Activated T-helper 2 cell treated with anti-CD3 and anti-CD28 coated beads, Interferon-gamma antibody, Interleukin-2, Interleukin-4, amounts not matched to agents 10 μg/mL and 5 μg/mL and 100 μg/mL, durations not matched to agents 14 hours and 24 hours and 36 hours (primary cell): ENCODE measurements at regions of chr7 and their contacts with region 1.

Region 1: GRCh38 chr7:44797329-44798251 is 1.1 kb downstream of the PPIA start:
- DNase-seq: peak; percentile 80
- H3K4me3 Mint-ChIP-seq: peak overlapping the region; percentile 98
- H3K27ac Mint-ChIP-seq: peak overlapping the region; percentile 95
- H3K4me1 Mint-ChIP-seq: peaks cover 28% of the 10 kb centered on the region
- H3K27me3 Mint-ChIP-seq: no peaks in the 10 kb centered on the region

Region 2: GRCh38 chr7:44490351-44491200 is 307.0 kb before region 1 on chr7 and contains the start of gene NUDCD3:
- intact Hi-C with region 1: loop called (anchors 2 kb)
- DNase-seq: peak; percentile 77
- H3K4me3 Mint-ChIP-seq: peak within 1 kb of the TSS; percentile 85
- H3K27ac Mint-ChIP-seq: peak within 1 kb of the TSS; percentile 91
- H3K4me1 Mint-ChIP-seq: peaks cover 35% of the 10 kb centered on the region
- H3K27me3 Mint-ChIP-seq: no peaks in the 10 kb centered on the region
- total RNA-seq, gene NUDCD3: 86.8 and 90.2 TPM in 2 replicates

Region 3: DNA sequence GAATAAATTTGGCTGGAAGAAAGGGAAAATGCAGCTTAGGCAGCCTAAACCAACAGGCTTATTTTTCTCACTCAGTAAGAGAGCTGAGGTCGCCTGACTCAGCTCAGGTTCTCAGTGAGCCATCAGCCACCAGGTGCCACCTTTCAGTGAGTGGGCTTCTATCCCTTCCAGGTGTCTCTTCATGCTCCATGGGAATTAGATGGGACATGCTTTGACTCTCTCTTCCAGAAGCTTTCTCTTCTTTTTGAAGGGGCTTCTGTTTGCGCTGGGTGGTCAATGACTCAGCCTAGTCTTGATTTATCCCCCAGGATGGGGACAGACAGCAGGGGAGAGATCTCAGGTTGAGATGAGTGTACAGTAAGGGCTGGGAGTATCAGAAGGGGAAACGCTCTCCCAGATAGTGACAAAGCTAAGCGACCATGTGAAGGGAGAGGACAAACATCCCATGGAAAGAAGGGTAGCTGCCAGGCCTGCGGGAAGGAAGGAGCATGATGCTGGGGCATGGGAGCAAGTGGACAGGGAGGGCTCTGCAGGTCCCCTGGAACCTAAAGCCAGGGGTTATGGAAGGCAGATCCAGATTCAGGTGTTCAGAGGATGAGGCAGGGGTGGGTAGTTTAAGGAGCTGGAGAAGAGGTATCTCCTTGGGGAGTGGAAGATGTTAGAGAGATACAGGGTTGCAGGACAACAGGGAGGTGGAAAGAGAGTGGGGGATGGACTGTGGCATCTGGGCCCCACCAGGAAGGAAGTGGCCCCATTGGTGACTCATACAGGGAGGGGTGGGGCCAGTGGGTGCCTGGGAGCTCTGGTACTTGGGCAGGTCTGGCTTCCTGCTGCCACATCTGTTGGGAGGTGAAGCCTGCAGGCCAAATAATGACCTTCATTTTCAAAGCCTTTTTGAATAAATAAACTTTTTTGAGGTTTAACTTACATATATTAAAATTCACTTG is 158.7 kb before region 1 on chr7:
- intact Hi-C with region 1: loop called (anchors 2 kb)
- DNase-seq: peak; percentile 84
- H3K4me3 Mint-ChIP-seq: peak overlapping the region; percentile 79
- H3K27ac Mint-ChIP-seq: peak overlapping the region; percentile 99
- H3K4me1 Mint-ChIP-seq: peaks cover 70% of the 10 kb centered on the region
- H3K27me3 Mint-ChIP-seq: no peaks in the 10 kb centered on the region

Region 4: DNA sequence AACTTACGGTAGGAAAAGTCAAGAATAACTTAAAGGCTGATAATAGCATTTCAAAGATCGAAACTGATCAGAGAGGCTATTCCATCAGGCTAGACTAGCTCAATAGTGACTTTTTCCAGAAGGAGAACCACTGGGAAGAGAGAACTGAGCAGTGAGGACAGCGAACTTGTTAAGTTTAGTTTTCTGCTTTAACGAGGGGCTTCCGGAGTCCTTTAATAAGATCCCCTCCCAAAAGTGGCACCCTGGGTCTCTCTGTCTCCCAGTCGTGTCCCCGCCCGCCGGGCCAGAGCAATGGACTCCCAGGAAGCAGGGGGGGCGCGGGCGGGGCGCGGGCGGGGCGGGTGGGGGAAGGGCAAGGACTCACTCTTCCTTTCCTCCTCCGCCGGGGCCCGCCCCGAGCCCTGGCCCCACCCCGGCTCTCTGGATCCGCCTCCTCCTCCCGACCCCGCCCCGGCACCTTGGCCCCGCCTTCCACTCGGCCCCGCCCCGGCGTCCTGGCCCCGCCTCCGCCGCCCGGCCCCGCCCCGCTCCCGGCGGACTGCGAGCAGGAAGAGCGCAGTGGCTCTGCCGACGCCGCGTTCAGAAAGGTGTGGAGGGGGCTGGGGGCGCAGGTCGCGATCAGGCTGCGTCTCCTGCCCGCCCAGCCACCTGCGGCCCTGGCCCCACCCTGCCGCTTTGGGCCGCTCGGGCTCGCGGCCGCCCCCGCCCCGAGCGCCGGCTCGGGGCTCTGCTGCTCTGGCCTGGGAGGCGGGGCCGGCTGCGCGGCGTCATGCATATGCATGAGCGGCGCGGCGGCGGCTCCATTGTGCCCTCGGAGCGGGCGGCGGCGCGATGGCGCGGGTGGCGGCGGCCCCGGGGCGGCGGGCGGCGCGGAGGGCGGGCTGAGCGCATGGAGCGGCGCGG is 49.3 kb before region 1 on chr7 and contains the start of gene ZMIZ2:
- intact Hi-C with region 1: loop called (anchors 1 kb)
- DNase-seq: peak; percentile 87
- H3K4me3 Mint-ChIP-seq: peak within 1 kb of the TSS; percentile 85
- H3K27ac Mint-ChIP-seq: peak within 1 kb of the TSS; percentile 94
- H3K4me1 Mint-ChIP-seq: peaks cover 31% of the 10 kb centered on the region
- H3K27me3 Mint-ChIP-seq: no peaks in the 10 kb centered on the region
- total RNA-seq, gene ZMIZ2: 105 TPM in 2 replicates

Region 5: DNA sequence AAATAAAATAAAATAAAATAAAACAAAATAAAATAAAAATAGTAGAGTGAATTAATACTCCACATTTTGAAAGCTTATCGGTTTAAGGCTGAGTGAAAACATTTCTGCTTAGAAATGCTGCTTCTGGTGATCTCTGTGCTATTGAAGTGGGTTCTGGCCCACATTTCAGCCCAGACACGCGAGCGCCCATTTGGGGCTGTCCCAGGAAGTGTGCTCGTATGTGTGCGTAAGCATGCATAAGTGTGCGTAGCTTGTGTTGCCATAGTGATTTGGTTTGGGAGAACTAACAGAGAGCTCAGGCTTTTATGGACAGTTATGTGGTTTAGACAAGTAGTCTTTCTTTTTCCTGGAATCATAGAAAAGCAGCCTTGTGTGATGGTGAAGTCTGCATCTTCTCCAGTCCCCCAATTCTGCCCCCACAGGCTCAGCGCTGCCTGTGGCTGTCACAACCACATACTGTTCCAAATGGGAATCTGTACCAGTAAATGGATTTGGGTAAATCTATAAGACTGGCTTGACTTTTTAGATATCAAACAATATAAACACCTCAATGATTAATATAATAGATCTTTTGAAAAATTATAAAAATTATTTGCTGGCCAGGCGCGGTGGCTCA is 117.5 kb after region 1 on chr7:
- intact Hi-C with region 1: loop called (anchors 2 kb)
- DNase-seq: peak; percentile 78
- H3K4me3 Mint-ChIP-seq: peak overlapping the region; percentile 13
- H3K27ac Mint-ChIP-seq: peak overlapping the region; percentile 92
- H3K4me1 Mint-ChIP-seq: peaks cover 14% of the 10 kb centered on the region
- H3K27me3 Mint-ChIP-seq: no peaks in the 10 kb centered on the region